Heart left ventricle (tissue), 16 donors: ENCODE measurements at regions of chr10 and their contacts with region 1.

Region 1: GRCh38 chr10:68697106-68697505 is 23.9 kb upstream of the CCAR1 start:
- DNase-seq: no peak
- ATAC-seq: no peak
- H3K4me3 ChIP-seq: no peak overlapping the region
- H3K27ac ChIP-seq: no peak overlapping the region
- H3K4me1 ChIP-seq: peaks cover 0 to 15% (median 0%) of the 10 kb centered on the region in 12 donors
- H3K27me3 ChIP-seq: no peaks in the 10 kb centered on the region
- CTCF ChIP-seq: no peak
- POLR2A ChIP-seq: no peak

Region 2: GRCh38 chr10:68537796-68538195 is 159.3 kb before region 1 on chr10:
- intact Hi-C with region 1: loop called in 1 of 10 experiments (anchors 10 kb)
- DNase-seq: no peak
- ATAC-seq: no peak
- H3K4me3 ChIP-seq: no peak overlapping the region
- H3K27ac ChIP-seq: no peak overlapping the region
- H3K4me1 ChIP-seq: no peaks in the 10 kb centered on the region
- H3K27me3 ChIP-seq: no peaks in the 10 kb centered on the region
- CTCF ChIP-seq: no peak
- POLR2A ChIP-seq: no peak